WTC11 (cell line): ENCODE measurements at regions of chr15 and their contacts with region 1.

Region 1: DNA sequence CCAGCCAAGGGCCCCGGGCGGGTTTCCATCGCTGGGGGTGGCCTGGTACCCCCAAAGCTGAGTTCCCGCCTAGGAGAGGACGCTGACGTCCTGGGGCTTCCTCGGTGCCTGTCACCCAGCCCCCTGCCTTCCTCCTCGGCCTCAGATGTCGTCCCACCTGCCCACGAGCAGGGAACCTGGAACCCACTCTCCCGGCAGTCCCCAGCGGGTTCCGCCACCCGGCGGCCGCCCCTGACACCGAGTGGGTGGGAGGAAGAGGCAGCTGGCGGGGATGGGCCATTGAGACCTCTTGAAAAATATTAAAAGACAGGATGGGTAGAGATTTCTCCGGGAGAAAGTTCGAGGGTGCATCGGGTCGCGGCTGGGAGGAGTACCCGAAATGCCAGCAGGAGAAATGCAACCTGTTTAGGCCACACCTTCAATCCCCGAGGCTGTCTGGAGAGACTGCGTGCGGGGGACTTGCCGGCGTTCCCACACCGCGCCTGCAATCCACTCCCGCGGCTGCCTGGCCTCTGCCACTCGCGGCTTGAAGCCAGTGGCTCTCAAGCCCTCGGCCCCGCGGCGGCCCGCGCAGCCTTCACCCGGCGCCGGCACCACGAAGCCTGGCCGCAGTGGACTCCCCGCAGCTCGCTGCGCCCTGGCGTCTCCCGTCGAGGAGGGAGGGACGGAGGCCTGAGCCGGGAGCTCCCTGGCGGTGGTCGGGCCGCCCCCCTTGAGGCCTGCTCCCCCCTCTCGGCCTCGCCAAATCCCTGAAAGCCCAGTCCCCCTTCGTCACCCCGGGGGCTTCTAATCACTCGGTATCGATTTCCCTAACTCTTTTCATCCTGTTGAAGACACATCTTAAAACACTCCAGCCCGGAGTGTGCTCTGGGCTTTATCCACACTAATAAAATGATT is 8.6 kb upstream of the NR2F2 start:
- DNase-seq: peak; percentile 39
- ATAC-seq: peak; percentile 9
- H3K4me3 Mint-ChIP-seq: peak overlapping the region; percentile 69
- H3K27ac Mint-ChIP-seq: no peak overlapping the region
- H3K4me1 Mint-ChIP-seq: peaks cover 57% of the 10 kb centered on the region
- H3K27me3 Mint-ChIP-seq: peaks cover 100% of the 10 kb centered on the region
- CTCF ChIP-seq: no peak

Region 2: GRCh38 chr15:96345560-96346399 is 23.9 kb after region 1 on chr15:
- CTCF ChIA-PET with region 1: interaction called, 76 read pairs
- POLR2A ChIA-PET with region 1: interaction called, 4 read pairs
- DNase-seq: peak; percentile 49
- ATAC-seq: peak; percentile 23
- H3K4me3 Mint-ChIP-seq: peak overlapping the region; percentile 81
- H3K27ac Mint-ChIP-seq: no peak overlapping the region
- H3K4me1 Mint-ChIP-seq: peaks cover 82% of the 10 kb centered on the region
- H3K27me3 Mint-ChIP-seq: no peaks in the 10 kb centered on the region; the same call in 1 of the 2 replicates
- CTCF ChIP-seq: no peak